ENCODE measurements at regions of chr11 and their contacts with region 1.

Region 1: GRCh38 chr11:95150946-95151684 is 61.5 kb downstream of the ENDOD1 start:
- DNase-seq: peak; percentile 90 to 95 (median 93)
- ATAC-seq: peak; percentile 90 to 96 (median 91)
- H3K4me3 ChIP-seq: peak overlapping the region; percentile 62 to 68 (median 64)
- H3K27ac ChIP-seq: peak overlapping the region; percentile 73 to 93 (median 87)
- H3K4me1 ChIP-seq: peaks cover 0 to 6% (median 0%) of the 10 kb centered on the region in 4 donors
- H3K27me3 ChIP-seq: no peaks in the 10 kb centered on the region
- CTCF ChIP-seq: peak; percentile 68 to 88 (median 77)
- POLR2A ChIP-seq: peak; percentile 66

Region 2: DNA sequence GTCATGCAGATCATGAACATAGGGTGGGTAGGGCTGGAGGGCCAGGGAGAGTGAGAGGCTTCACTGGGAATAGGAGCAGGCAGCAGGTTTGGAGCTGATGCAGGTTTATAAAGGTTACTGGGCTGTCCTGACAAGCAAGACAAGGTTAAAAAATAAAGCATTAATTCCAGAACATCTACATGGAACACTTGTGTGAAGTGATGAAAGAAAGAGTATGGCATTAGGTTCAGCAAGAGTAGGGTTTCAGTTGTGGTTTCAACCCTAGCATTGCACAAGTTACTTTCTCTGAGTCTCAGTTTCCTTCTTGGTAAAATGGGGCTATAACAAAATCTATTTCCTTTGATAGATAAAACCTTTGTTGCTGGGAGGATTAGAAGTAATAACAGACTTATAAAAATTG is 194.5 kb after region 1 on chr11:
- intact Hi-C with region 1: loop called in 1 of 2 experiments (anchors 10 kb)
- DNase-seq: no peak
- ATAC-seq: no peak
- H3K4me3 ChIP-seq: no peak overlapping the region
- H3K27ac ChIP-seq: no peak overlapping the region
- H3K4me1 ChIP-seq: peaks cover 0 to 5% (median 2%) of the 10 kb centered on the region in 4 donors
- H3K27me3 ChIP-seq: no peaks in the 10 kb centered on the region
- CTCF ChIP-seq: no peak
- POLR2A ChIP-seq: no peak

Region 3: GRCh38 chr11:95705485-95706124 is 554.5 kb after region 1 on chr11:
- intact Hi-C with region 1: loop called in 1 of 2 experiments (anchors 5 kb)
- DNase-seq: peak; percentile 83 to 89 (median 84)
- ATAC-seq: peak; percentile 98 to 100 (median 99)
- H3K4me3 ChIP-seq: no peak overlapping the region
- H3K27ac ChIP-seq: no peak overlapping the region
- H3K4me1 ChIP-seq: peaks cover 0 to 6% (median 0%) of the 10 kb centered on the region in 4 donors
- H3K27me3 ChIP-seq: no peaks in the 10 kb centered on the region
- CTCF ChIP-seq: peak; percentile 94 to 98 (median 95)
- POLR2A ChIP-seq: no peak

Region 4: DNA sequence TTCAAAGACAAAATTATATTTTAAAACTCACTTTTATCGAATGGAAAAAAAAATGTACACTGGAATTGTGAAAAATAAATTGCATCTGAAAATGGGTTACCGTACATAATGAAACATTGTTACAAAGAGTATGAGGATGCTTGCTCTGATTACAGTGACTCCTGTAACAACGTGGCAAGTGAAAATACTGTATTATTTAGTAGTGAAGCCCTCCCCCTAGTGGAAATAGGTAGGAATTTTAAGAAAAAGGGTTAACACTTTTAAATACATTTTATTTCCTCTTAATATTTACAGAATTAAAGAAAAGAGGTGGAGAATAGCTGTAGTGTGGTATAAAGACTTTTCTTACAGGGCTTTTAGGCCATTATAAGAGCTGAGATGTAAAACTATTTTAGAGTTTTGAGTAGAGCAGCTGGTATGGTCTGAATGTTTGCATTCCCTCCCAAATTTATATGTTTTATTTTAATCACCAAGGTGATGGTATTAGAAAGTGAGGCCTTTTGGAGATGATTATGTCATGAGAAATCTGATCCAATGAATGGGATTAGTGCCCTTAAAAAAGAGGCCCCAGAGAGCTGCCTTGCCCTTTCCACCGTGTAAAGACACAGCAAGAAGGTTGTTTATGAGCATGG is 613.3 kb after region 1 on chr11:
- intact Hi-C with region 1: loop called in 1 of 2 experiments (anchors 5 kb)
- DNase-seq: no peak
- ATAC-seq: peak; percentile 75 to 84 (median 80)
- H3K4me3 ChIP-seq: no peak overlapping the region
- H3K27ac ChIP-seq: no peak overlapping the region
- H3K4me1 ChIP-seq: no peaks in the 10 kb centered on the region
- H3K27me3 ChIP-seq: no peaks in the 10 kb centered on the region
- CTCF ChIP-seq: peak; percentile 68 to 77 (median 73)
- POLR2A ChIP-seq: no peak